Mammary epithelial cell (primary cell): ENCODE measurements at regions of chr1 and their contacts with region 1.

Region 1: GRCh38 chr1:19251305-19252196 is at the starts of genes EMC1 and MRTO4:
- DNase-seq: peak; percentile 85
- H3K4me3 ChIP-seq: peak within 1 kb of the TSS; percentile 86 to 99 (median 96)
- H3K27ac ChIP-seq: peak within 1 kb of the TSS; percentile 84
- H3K4me1 ChIP-seq: peaks cover 23% of the 10 kb centered on the region
- H3K27me3 ChIP-seq: no peaks in the 10 kb centered on the region
- CTCF ChIP-seq: no peak
- total RNA-seq, gene EMC1: 68.0 to 75.0 TPM
- total RNA-seq, gene MRTO4: 23.3 to 51.6 TPM

Region 2: DNA sequence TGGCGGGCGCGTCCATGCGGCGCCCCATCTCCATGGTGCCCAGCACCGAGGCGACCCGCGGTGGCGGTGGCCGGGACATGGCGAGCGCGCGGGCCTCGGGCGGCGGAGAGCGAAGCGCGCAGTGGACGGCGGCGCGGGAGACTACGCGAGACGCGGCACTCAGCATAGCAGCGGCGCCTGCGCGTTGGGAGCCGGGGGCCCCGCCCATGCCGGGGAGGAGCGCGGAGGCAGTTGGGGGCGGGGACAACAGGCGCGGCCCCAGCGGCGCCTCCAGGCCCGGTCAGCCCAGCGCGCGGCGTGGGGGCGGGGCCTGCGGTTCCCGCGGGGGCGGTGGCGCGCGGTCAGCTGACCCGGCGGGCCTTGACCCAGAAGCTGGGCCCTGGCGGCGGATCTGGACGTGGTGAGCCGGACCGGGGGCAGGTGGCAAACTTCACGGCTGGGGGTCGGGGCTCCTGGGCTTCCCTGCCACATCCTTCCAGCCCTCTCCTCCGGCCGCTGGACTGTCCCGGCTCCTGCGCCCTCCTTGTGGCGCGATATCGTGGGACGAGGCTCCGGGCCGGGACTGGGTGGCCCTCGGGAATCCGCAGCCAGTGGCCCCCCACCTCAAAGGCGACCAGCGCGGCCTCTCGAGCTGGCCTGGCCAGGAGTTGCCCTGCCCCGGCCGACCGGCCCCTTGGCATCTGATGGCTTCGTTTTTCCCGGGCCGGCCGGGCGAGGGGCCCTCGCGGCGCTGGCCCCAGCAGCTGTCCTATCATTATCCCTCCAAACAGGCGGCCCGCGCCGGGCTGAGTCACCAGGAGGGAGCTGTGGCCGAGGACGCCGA is 60.6 kb after region 1 on chr1 and contains the starts of genes AKR7A2 and SLC66A1:
- CTCF ChIA-PET with region 1: no interaction called
- dilution Hi-C with region 1: no loop called
- in situ Hi-C with region 1: no loop called
- intact Hi-C with region 1: loop called (anchors 1 kb)
- DNase-seq: peak; percentile 92
- H3K4me3 ChIP-seq: peak within 1 kb of the TSS; percentile 71 to 88 (median 87)
- H3K27ac ChIP-seq: peak within 1 kb of the TSS; percentile 69
- H3K4me1 ChIP-seq: peaks cover 43% of the 10 kb centered on the region
- H3K27me3 ChIP-seq: no peaks in the 10 kb centered on the region
- CTCF ChIP-seq: no peak
- total RNA-seq, gene AKR7A2: 45.7 to 60.3 TPM
- total RNA-seq, gene SLC66A1: 17.7 to 19.7 TPM

Region 3: GRCh38 chr1:19664453-19665185 is 413.1 kb after region 1 on chr1 and contains the start of gene HTR6:
- CTCF ChIA-PET with region 1: no interaction called
- dilution Hi-C with region 1: no loop called
- in situ Hi-C with region 1: no loop called
- intact Hi-C with region 1: no loop called
- DNase-seq: no peak
- H3K4me3 ChIP-seq: peak within 1 kb of the TSS in 2 of 3 experiments; percentile 20 to 33
- H3K27ac ChIP-seq: no peak within 1 kb of the TSS
- H3K4me1 ChIP-seq: peaks cover 18% of the 10 kb centered on the region
- H3K27me3 ChIP-seq: peaks cover 19% of the 10 kb centered on the region
- CTCF ChIP-seq: no peak
- total RNA-seq, gene HTR6: not detected